ENCODE measurements at regions of chr9 and their contacts with region 1.

Region 1: GRCh38 chr9:131393622-131394463 is at the start of gene PRRC2B:
- DNase-seq: peak; percentile 71
- H3K4me3 ChIP-seq: peak within 1 kb of the TSS; percentile 66 to 90 (median 86)
- H3K27ac ChIP-seq: peak within 1 kb of the TSS; percentile 57
- H3K4me1 ChIP-seq: peaks cover 40% of the 10 kb centered on the region
- H3K27me3 ChIP-seq: no peaks in the 10 kb centered on the region
- CTCF ChIP-seq: peak in 1 of 2 donors; percentile 33
- POLR2A ChIP-seq: peak; percentile 65
- total RNA-seq, gene PRRC2B: 248 and 256 TPM in 2 replicates

Region 2: DNA sequence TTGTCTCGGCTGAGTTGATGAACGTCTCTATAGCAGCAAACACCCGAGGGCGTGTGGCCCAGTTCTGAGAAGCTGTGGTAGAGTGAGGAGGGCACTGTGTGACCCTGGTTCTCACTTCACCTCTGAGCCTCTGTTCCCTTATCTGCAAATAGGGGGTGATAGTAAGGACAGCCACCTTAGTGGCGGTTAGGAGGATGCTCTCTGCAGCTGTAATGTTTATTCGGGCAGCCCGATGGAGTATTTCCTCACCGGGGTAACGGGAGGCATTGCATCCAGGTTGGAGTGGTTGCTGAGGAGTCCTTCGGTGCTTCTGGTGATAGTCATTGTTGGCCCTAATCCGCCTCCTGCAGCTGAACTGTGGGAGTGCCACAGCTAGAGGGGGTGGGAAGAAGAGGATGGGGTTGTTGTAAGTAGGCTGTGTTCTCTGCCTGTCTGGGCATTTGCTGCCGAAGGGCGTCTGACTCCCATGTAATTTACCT is 13.9 kb after region 1 on chr9:
- CTCF ChIA-PET with region 1: interaction called, 7 read pairs
- POLR2A ChIA-PET with region 1: interaction called, 3 read pairs
- dilution Hi-C with region 1: no loop called
- intact Hi-C with region 1: loop called (anchors 1 kb)
- DNase-seq: peak; percentile 63
- H3K4me3 ChIP-seq: no peak overlapping the region
- H3K27ac ChIP-seq: peak overlapping the region; percentile 33
- H3K4me1 ChIP-seq: peaks cover 46% of the 10 kb centered on the region
- H3K27me3 ChIP-seq: no peaks in the 10 kb centered on the region
- CTCF ChIP-seq: peak; percentile 22 to 35
- POLR2A ChIP-seq: no peak

Region 3: DNA sequence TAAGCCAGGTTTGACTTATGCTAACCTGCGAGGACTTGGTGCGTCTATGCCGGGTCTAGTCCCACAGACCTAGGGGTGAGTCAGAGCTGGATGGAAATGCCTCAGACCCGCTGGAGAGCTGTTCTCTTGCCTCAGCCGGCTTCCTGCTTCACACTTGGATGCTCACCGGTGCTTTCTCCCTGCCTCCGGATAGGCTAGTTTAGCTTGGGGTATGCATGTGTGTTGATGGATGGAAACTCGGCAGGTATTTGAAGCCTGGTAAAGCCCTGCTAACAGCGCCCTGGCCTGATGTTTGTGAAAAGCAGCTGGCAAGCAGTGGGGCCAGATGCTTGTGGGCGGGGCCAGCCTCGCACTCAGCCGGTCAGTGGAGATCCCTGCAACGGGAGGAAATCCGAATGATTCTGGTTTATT is 29.3 kb after region 1 on chr9:
- CTCF ChIA-PET with region 1: interaction called, 3 read pairs
- POLR2A ChIA-PET with region 1: no interaction called
- dilution Hi-C with region 1: no loop called
- intact Hi-C with region 1: loop called (anchors 1 kb)
- DNase-seq: peak; percentile 91
- H3K4me3 ChIP-seq: no peak overlapping the region
- H3K27ac ChIP-seq: peak overlapping the region; percentile 89
- H3K4me1 ChIP-seq: peaks cover 42% of the 10 kb centered on the region
- H3K27me3 ChIP-seq: no peaks in the 10 kb centered on the region
- CTCF ChIP-seq: no peak
- POLR2A ChIP-seq: no peak

Region 4: DNA sequence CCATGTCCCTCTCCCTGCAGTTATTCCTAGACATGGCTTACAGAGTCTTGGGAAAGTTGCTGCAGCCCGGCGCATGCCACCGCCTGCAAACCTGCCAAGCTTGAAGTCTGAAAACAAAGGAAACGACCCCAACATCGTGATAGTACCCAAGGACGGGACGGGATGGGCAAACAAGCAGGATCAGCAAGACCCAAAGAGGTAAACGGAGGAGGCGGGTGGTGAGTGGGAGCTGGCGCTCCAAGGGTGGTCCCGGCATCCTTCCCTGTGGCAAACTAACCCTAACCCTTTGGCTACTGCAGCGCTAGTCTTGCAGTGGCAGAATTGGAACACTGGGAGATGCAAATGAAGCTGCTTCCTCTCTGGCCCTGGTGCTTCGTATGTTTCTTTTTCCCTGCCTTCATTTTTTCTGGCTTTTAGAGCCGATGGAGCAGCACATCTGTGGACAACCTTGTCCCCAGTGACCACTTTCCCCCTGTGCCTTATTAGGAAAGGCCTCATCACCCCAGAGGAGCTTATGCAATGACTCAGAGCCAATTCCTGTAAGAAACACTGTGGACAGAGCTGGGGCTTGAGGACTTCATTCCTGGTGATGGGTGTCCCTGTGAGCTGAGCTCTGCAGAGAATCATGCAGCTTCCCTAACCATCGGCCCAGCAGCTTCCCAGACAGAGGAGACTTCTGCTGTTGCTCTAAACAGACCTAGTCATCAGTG is 38.9 kb after region 1 on chr9:
- CTCF ChIA-PET with region 1: interaction called, 4 read pairs
- POLR2A ChIA-PET with region 1: no interaction called
- dilution Hi-C with region 1: no loop called
- intact Hi-C with region 1: loop called (anchors 5 kb)
- DNase-seq: peak; percentile 39
- H3K4me3 ChIP-seq: no peak overlapping the region
- H3K27ac ChIP-seq: peak overlapping the region; percentile 27
- H3K4me1 ChIP-seq: peaks cover 32% of the 10 kb centered on the region
- H3K27me3 ChIP-seq: no peaks in the 10 kb centered on the region
- CTCF ChIP-seq: no peak
- POLR2A ChIP-seq: no peak

Region 5: GRCh38 chr9:131585375-131585774 is 191.5 kb after region 1 on chr9:
- CTCF ChIA-PET with region 1: no interaction called
- POLR2A ChIA-PET with region 1: no interaction called
- dilution Hi-C with region 1: no loop called
- intact Hi-C with region 1: no loop called
- DNase-seq: no peak
- H3K4me3 ChIP-seq: no peak overlapping the region
- H3K27ac ChIP-seq: no peak overlapping the region
- H3K4me1 ChIP-seq: no peaks in the 10 kb centered on the region
- H3K27me3 ChIP-seq: no peaks in the 10 kb centered on the region
- CTCF ChIP-seq: no peak
- POLR2A ChIP-seq: no peak

Measured in endothelial cell of umbilical vein (primary cell).